ENCODE measurements at regions of chr7 and their contacts with region 1.

Region 1: GRCh38 chr7:50696810-50697582 is 85.7 kb downstream of the GRB10 start:
- DNase-seq: no peak
- H3K4me3 Mint-ChIP-seq: no peak overlapping the region
- H3K27ac Mint-ChIP-seq: no peak overlapping the region
- H3K4me1 Mint-ChIP-seq: peaks cover 8% of the 10 kb centered on the region
- H3K27me3 Mint-ChIP-seq: peaks cover 13% of the 10 kb centered on the region

Region 2: DNA sequence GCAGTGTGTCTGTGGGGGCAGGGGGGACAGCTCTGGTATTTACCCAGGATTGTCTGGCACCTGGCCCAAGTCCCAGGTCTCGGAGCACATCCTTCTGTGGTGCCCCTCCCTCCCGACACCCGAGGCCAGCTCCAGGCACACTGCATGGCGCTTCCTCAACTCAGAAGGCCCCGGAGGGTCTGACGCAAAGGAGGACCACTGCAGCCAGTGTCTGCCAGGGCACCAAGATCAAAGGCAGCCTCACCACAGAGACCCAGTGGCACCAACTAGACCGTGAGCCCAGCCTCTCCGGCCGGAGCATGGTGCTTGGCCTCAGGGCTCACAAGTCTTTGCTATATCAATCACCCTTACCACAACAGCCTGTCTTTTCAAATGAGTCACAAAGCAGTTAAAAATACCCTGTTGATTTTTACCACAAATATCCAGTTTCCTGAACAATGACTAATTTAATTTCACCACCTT is 32.5 kb before region 1 on chr7:
- intact Hi-C with region 1: no loop called
- DNase-seq: no peak
- H3K4me3 Mint-ChIP-seq: no peak overlapping the region
- H3K27ac Mint-ChIP-seq: no peak overlapping the region
- H3K4me1 Mint-ChIP-seq: peaks cover 67% of the 10 kb centered on the region
- H3K27me3 Mint-ChIP-seq: no peaks in the 10 kb centered on the region

Region 3: DNA sequence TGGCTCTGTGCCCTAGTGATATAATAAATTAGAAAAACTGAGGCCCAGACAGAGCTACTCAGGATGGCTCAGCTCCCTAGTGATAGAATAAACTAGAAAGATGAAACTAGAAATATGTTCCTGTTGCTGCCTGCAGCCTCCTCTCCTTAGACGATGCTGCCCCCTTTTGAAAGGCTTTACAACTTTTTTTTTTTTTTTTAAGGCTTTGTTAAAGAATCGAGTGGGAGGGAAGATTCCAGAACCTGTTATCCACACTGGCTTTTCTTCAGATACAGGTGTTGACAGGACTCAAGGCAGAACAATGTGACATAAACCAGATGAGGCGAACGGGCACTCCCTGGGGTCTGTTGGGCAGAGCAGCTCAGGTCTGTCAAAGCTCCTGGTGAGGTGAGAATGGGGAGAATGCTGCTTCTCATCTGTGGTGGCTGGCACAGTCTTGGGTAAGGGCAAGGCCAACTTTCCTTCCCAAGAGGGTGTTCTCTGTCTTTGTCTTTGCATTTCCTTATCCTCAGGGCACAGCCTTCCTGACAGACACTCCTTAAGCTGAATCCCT is 444.5 kb after region 1 on chr7:
- intact Hi-C with region 1: loop called (anchors 5 kb)
- DNase-seq: no peak
- H3K4me3 Mint-ChIP-seq: no peak overlapping the region
- H3K27ac Mint-ChIP-seq: no peak overlapping the region
- H3K4me1 Mint-ChIP-seq: peaks cover 23% of the 10 kb centered on the region
- H3K27me3 Mint-ChIP-seq: peaks cover 11% of the 10 kb centered on the region

Measured in activated T-helper 2 cell treated with anti-CD3 and anti-CD28 coated beads, Interferon-gamma antibody, Interleukin-2, Interleukin-4, amounts not matched to agents 10 μg/mL and 5 μg/mL and 100 μg/mL, durations not matched to agents 14 hours and 24 hours and 36 hours (primary cell).